Thyroid gland (tissue), 4 donors: ENCODE measurements at regions of chr4 and their contacts with region 1.

Region 1: DNA sequence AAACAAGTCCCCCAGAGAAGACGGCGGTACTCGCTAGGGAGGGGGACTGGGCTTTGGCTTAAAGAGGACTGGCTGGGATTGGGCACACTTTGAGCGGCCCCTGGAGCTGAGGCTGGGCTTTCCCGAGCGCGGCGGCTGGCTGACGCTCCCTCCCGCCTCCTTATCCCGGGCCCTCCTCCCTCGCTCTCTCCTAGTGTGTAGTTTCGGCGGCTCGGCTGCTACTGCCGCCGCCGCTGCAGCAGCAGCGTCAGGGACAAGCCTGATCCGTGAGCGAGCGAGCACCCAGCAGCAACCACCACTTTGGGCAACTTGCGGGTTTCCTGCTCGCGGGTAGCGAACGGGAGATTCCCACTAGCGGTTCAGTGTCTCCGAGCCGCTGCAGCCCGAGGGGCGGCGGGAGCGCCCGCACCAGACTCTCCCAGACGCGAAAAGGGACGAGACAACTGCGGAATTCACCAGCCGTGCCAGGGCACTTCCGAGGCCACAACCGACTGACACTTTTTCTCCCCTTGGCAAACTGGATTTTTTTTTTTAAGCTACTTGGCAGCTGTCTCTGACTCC is 629 bp upstream of the PCDH7 start:
- DNase-seq: peak; percentile 78 to 79
- H3K4me3 ChIP-seq: peak overlapping the region; percentile 7 to 51 (median 45)
- H3K27ac ChIP-seq: peak overlapping the region; percentile 20 to 75 (median 71)
- H3K4me1 ChIP-seq: peaks cover 10 to 13% of the 10 kb centered on the region in 2 donors
- H3K27me3 ChIP-seq: no peaks in the 10 kb centered on the region
- CTCF ChIP-seq: no peak
- POLR2A ChIP-seq: peak in 1 of 2 donors; percentile 50

Region 2: GRCh38 chr4:30770049-30770549 is 50.6 kb after region 1 on chr4:
- intact Hi-C with region 1: loop called (anchors 10 kb)
- DNase-seq: no peak
- H3K4me3 ChIP-seq: no peak overlapping the region
- H3K27ac ChIP-seq: no peak overlapping the region
- H3K4me1 ChIP-seq: peaks cover 7% of the 10 kb centered on the region in 2 donors
- H3K27me3 ChIP-seq: no peaks in the 10 kb centered on the region
- CTCF ChIP-seq: no peak
- POLR2A ChIP-seq: no peak